ENCODE measurements at regions of chr21 and their contacts with region 1.

Region 1: GRCh38 chr21:32392880-32393676 is at the start of gene URB1:
- DNase-seq: peak; percentile 46
- ATAC-seq: peak; percentile 97
- H3K4me3 ChIP-seq: peak within 1 kb of the TSS; percentile 91
- H3K27ac ChIP-seq: peak within 1 kb of the TSS; percentile 68
- H3K4me1 ChIP-seq: no peaks in the 10 kb centered on the region
- H3K27me3 ChIP-seq: no peaks in the 10 kb centered on the region
- CTCF ChIP-seq: no peak
- EP300 ChIP-seq: no peak
- POLR2A ChIP-seq: peak; percentile 86
- RAD21 ChIP-seq: no peak
- polyA plus RNA-seq, gene URB1: 0.56 to 1.2 TPM

Region 2: GRCh38 chr21:32597205-32597604 is 204.1 kb after region 1 on chr21:
- CTCF ChIA-PET with region 1: interaction called, 18 read pairs
- POLR2A ChIA-PET with region 1: interaction called, 10 read pairs
- RAD21 ChIA-PET with region 1: no interaction called
- SMC1A ChIA-PET with region 1: no interaction called
- in situ Hi-C with region 1: no loop called
- intact Hi-C with region 1: no loop called
- DNase-seq: no peak
- ATAC-seq: no peak
- H3K4me3 ChIP-seq: no peak overlapping the region
- H3K27ac ChIP-seq: no peak overlapping the region
- H3K4me1 ChIP-seq: no peaks in the 10 kb centered on the region
- H3K27me3 ChIP-seq: no peaks in the 10 kb centered on the region
- CTCF ChIP-seq: no peak
- EP300 ChIP-seq: no peak
- POLR2A ChIP-seq: no peak
- RAD21 ChIP-seq: no peak

Region 3: DNA sequence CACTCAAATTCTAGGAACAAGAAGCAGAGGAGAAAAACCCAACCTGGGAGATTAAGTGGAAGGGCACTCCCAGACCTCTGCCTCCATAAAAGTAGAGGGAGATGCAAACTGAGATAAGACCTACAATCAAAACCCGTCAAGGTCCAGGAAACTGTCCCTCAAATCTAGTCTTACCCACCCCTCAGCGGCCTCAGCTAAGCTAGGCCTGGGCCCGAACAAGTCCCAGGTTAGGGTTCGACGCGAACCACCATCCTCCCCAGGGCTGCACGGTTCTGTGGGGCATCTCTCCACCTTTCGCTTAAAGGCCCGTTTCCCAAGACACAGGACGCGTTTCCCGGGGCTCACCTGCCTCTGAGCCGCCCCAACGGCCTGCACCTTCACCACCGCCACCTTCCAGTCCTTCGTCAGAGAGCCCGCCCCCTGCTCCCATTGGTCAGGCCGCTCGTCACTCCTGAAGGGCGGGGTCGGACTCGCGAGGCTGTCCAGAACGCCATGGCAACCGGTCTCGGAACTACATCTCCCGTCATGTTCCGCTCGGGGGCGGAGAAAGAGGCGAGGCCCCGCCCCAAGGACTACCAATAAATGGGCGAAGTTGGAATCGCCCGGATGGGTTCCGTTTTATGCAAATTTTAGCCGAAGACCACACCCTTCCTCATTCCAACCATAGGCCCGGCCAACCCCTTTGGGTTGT is 1248.4 kb after region 1 on chr21 and contains the start of gene CRYZL1:
- CTCF ChIA-PET with region 1: no interaction called
- POLR2A ChIA-PET with region 1: no interaction called
- RAD21 ChIA-PET with region 1: no interaction called
- SMC1A ChIA-PET with region 1: no interaction called
- in situ Hi-C with region 1: loop called (anchors 25 kb)
- intact Hi-C with region 1: no loop called
- DNase-seq: peak; percentile 96
- ATAC-seq: peak; percentile 88
- H3K4me3 ChIP-seq: peak within 1 kb of the TSS; percentile 94
- H3K27ac ChIP-seq: peak within 1 kb of the TSS; percentile 91
- H3K4me1 ChIP-seq: no peaks in the 10 kb centered on the region
- H3K27me3 ChIP-seq: peaks cover 0 to 6% of the 10 kb centered on the region in 2 experiments; a peak in 2 of 4 replicates
- CTCF ChIP-seq: no peak
- EP300 ChIP-seq: no peak
- POLR2A ChIP-seq: peak; percentile 92
- RAD21 ChIP-seq: no peak
- polyA plus RNA-seq, gene CRYZL1: 51.4 to 72.4 TPM